Activated T-helper 1 cell treated with anti-CD3 and anti-CD28 coated beads, Interleukin-12 subunit alpha, Interleukin-12 subunit beta, Interleukin-2, Interleukin-4 antibody, amounts not matched to agents 30 ng/mL and 10 ng/mL and 1 ng/mL, durations not matched to agents 14 hours and 24 hours and 36 hours (primary cell): ENCODE measurements at regions of chr12 and their contacts with region 1.

Region 1: GRCh38 chr12:8949342-8950220 is at the start of gene M6PR:
- DNase-seq: peak; percentile 86
- H3K4me3 Mint-ChIP-seq: peak within 1 kb of the TSS; percentile 100
- H3K27ac Mint-ChIP-seq: peak within 1 kb of the TSS; percentile 92
- H3K4me1 Mint-ChIP-seq: peaks cover 72% of the 10 kb centered on the region
- H3K27me3 Mint-ChIP-seq: no peaks in the 10 kb centered on the region
- total RNA-seq, gene M6PR: 179 and 192 TPM in 2 replicates

Region 2: DNA sequence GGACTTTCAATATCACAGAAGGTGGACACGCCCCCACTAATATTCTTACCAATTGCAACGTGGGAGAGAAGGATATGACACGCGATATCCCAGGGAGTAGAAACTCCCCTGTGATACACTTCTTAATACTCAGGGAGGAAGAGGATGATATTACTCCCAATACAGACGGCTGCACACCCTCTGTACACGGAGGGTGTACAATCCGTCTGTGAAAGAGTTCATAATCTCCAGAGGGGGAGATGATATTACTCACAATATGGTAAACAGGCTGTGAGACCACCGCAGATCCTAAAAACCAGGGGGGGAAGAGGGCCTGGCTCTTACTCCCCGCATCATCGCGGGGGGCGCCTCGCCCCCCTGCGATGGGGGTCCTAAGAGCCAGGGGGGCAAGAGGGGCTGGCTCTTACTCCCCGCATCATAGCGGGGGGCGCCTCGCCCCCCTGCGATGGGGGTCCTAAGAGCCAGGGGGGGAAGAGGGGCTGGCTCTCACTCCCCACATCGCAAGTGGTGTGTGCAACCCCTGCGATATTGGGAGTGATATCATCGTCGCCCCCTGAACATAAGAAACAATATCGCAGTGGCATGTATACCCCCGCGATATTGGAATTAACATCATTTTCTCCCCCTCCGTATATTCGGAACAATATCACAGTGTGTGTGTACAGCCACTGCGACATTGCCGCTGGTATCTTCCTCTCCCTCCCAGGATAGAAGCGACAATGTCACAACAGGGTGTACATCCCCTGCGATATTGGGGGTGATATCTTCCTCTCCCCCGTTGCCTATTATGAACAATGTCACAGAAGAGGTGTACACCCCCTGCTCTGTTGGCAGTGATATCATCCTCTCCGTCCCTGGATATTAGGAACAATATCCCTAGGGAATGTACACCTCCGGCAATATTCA is 502.7 kb before region 1 on chr12:
- intact Hi-C with region 1: no loop called
- DNase-seq: no peak
- H3K4me3 Mint-ChIP-seq: no peak overlapping the region
- H3K27ac Mint-ChIP-seq: no peak overlapping the region
- H3K4me1 Mint-ChIP-seq: no peaks in the 10 kb centered on the region
- H3K27me3 Mint-ChIP-seq: peaks cover 2% of the 10 kb centered on the region

Region 3: DNA sequence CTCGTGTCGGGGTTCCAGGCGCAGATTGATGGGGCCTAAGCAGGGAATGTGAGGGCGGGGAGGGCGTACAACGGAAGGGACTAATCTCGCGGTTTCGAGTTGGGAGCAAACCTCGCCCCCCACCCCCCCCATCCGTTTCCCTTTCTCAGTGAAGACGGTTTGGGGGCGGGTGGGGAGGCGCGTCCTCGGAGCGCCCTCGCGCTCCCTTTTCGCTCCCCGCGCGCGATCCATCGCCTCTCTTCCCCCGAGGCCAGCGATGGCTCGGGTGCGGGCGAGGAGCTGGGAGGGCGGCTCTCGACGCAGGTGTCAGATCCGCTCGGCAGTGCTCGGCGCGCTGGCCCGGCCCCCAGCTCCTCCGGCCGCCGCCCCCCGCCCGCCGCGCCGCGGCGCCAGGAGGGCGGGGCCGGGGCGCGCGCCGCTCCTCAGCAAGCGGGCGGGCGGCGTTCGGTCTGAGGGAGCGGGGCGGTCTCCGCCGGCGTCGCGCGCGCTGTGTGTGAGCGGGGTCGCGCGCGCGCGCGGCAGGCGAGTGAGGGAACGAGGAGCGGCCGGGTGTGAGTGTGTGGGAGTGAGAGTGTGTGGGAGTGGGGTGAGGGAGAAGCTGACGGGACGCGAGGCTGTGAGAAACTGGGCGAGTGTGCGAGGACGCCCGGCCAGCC is 252.0 kb before region 1 on chr12 and contains the start of gene RIMKLB:
- intact Hi-C with region 1: loop called (anchors 1 kb)
- DNase-seq: peak; percentile 38
- H3K4me3 Mint-ChIP-seq: peak within 1 kb of the TSS; percentile 86
- H3K27ac Mint-ChIP-seq: peak within 1 kb of the TSS; percentile 65
- H3K4me1 Mint-ChIP-seq: peaks cover 12% of the 10 kb centered on the region
- H3K27me3 Mint-ChIP-seq: peaks cover 63% of the 10 kb centered on the region
- total RNA-seq, gene RIMKLB: 0.47 and 0.52 TPM in 2 replicates

Region 4: GRCh38 chr12:8989413-8989812 is 39.8 kb after region 1 on chr12 and contains the start of gene KLRG1:
- intact Hi-C with region 1: loop called (anchors 2 kb)
- DNase-seq: no peak
- H3K4me3 Mint-ChIP-seq: peak within 1 kb of the TSS; percentile 4
- H3K27ac Mint-ChIP-seq: no peak within 1 kb of the TSS
- H3K4me1 Mint-ChIP-seq: peaks cover 39% of the 10 kb centered on the region
- H3K27me3 Mint-ChIP-seq: no peaks in the 10 kb centered on the region
- total RNA-seq, gene KLRG1: 0.69 and 1.4 TPM in 2 replicates

Region 5: DNA sequence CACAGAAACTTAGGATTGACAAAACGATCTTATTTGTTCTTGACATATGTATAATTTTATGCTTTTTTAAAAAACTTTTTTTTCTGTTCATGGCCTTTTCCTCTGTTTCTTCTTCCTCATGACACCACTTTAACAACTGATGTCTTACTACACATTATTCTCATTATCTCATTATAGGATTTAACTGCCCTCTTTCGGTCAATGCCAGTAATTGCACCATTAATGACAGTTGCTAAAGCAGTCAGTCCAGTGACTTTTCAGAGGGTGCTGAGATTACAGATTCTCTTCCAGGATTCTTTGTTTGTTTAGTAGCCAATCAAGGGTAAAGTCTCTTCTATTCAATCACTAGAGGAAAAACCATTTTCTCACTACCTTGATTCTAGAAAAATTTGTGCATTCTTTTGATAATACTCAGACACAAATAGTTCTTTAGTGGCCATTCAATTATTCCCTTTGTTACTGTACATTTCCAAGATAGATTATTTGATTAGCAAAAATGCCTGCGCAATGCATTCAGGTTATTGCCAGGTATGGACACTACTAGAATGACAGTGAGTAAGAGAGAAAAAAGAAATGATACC is 89.9 kb after region 1 on chr12:
- intact Hi-C with region 1: loop called (anchors 1 kb)
- DNase-seq: no peak
- H3K4me3 Mint-ChIP-seq: no peak overlapping the region
- H3K27ac Mint-ChIP-seq: no peak overlapping the region
- H3K4me1 Mint-ChIP-seq: peaks cover 30% of the 10 kb centered on the region
- H3K27me3 Mint-ChIP-seq: peaks cover 12% of the 10 kb centered on the region

Region 6: GRCh38 chr12:9244894-9245293 is 295.3 kb after region 1 on chr12:
- intact Hi-C with region 1: loop called (anchors 2 kb)
- DNase-seq: no peak
- H3K4me3 Mint-ChIP-seq: peak overlapping the region; percentile 66
- H3K27ac Mint-ChIP-seq: peak overlapping the region; percentile 95
- H3K4me1 Mint-ChIP-seq: peaks cover 23% of the 10 kb centered on the region
- H3K27me3 Mint-ChIP-seq: peaks cover 2% of the 10 kb centered on the region